ENCODE measurements at regions of chr10 and their contacts with region 1.

Region 1: GRCh38 chr10:96513698-96514561 is at the start of gene TLL2:
- DNase-seq: peak; percentile 28
- ATAC-seq: peak; percentile 97
- H3K4me3 ChIP-seq: peak within 1 kb of the TSS; percentile 51 to 68
- H3K27ac ChIP-seq: no peak within 1 kb of the TSS; the same call in 1 of the 2 replicates
- H3K4me1 ChIP-seq: peaks cover 16% of the 10 kb centered on the region
- H3K27me3 ChIP-seq: peaks cover 6% of the 10 kb centered on the region; the same call in 1 of the 2 replicates
- CTCF ChIP-seq: peak; percentile 77
- total RNA-seq, gene TLL2: 0.64 TPM

Region 2: GRCh38 chr10:96374985-96375830 is 138.7 kb before region 1 on chr10:
- CTCF ChIA-PET with region 1: interaction called, 7 read pairs
- POLR2A ChIA-PET with region 1: no interaction called
- in situ Hi-C with region 1: no loop called
- intact Hi-C with region 1: loop called (anchors 5 kb)
- DNase-seq: peak; percentile 89
- ATAC-seq: peak; percentile 91
- H3K4me3 ChIP-seq: peak overlapping the region; percentile 53 to 82
- H3K27ac ChIP-seq: peak overlapping the region; percentile 73
- H3K4me1 ChIP-seq: peaks cover 8% of the 10 kb centered on the region
- H3K27me3 ChIP-seq: 0 out of 2 replicates have a peak, but pooled peaks cover 2% of the 10 kb centered on the region
- CTCF ChIP-seq: peak; percentile 99

Region 3: GRCh38 chr10:96395931-96396877 is 117.7 kb before region 1 on chr10:
- CTCF ChIA-PET with region 1: interaction called, 7 read pairs
- POLR2A ChIA-PET with region 1: no interaction called
- in situ Hi-C with region 1: no loop called
- intact Hi-C with region 1: loop called (anchors 1 kb)
- DNase-seq: peak; percentile 50
- ATAC-seq: peak; percentile 96
- H3K4me3 ChIP-seq: no peak overlapping the region
- H3K27ac ChIP-seq: no peak overlapping the region
- H3K4me1 ChIP-seq: no peaks in the 10 kb centered on the region
- H3K27me3 ChIP-seq: peaks cover 38% of the 10 kb centered on the region
- CTCF ChIP-seq: peak; percentile 96

Region 4: GRCh38 chr10:96541921-96542320 is 28.0 kb after region 1 on chr10:
- CTCF ChIA-PET with region 1: no interaction called
- POLR2A ChIA-PET with region 1: no interaction called
- in situ Hi-C with region 1: no loop called
- intact Hi-C with region 1: no loop called
- DNase-seq: no peak
- ATAC-seq: no peak
- H3K4me3 ChIP-seq: no peak overlapping the region
- H3K27ac ChIP-seq: no peak overlapping the region
- H3K4me1 ChIP-seq: no peaks in the 10 kb centered on the region
- H3K27me3 ChIP-seq: no peaks in the 10 kb centered on the region
- CTCF ChIP-seq: no peak